Panc1 (cell line): ENCODE measurements at regions of chr6 and their contacts with region 1.

Region 1: GRCh38 chr6:16295060-16295459 is 56.7 kb downstream of the GMPR start:
- DNase-seq: no peak
- ATAC-seq: no peak
- H3K4me3 ChIP-seq: no peak overlapping the region
- H3K27ac ChIP-seq: no peak overlapping the region
- H3K4me1 ChIP-seq: no peaks in the 10 kb centered on the region
- H3K27me3 ChIP-seq: peaks cover 2% of the 10 kb centered on the region
- CTCF ChIP-seq: no peak

Region 2: GRCh38 chr6:16236631-16237199 is 58.3 kb before region 1 on chr6:
- CTCF ChIA-PET with region 1: no interaction called
- POLR2A ChIA-PET with region 1: interaction called, 10 read pairs
- in situ Hi-C with region 1: no loop called
- intact Hi-C with region 1: no loop called
- DNase-seq: no peak
- ATAC-seq: no peak
- H3K4me3 ChIP-seq: no peak overlapping the region
- H3K27ac ChIP-seq: no peak overlapping the region
- H3K4me1 ChIP-seq: no peaks in the 10 kb centered on the region
- H3K27me3 ChIP-seq: peaks cover 12% of the 10 kb centered on the region
- CTCF ChIP-seq: no peak

Region 3: GRCh38 chr6:16602035-16602434 is 307.0 kb after region 1 on chr6:
- CTCF ChIA-PET with region 1: no interaction called
- POLR2A ChIA-PET with region 1: no interaction called
- in situ Hi-C with region 1: no loop called
- intact Hi-C with region 1: no loop called
- DNase-seq: no peak
- ATAC-seq: no peak
- H3K4me3 ChIP-seq: no peak overlapping the region
- H3K27ac ChIP-seq: no peak overlapping the region
- H3K4me1 ChIP-seq: no peaks in the 10 kb centered on the region
- H3K27me3 ChIP-seq: no peaks in the 10 kb centered on the region
- CTCF ChIP-seq: no peak